PC-9 (cell line): ENCODE measurements at regions of chr20 and their contacts with region 1.

Region 1: DNA sequence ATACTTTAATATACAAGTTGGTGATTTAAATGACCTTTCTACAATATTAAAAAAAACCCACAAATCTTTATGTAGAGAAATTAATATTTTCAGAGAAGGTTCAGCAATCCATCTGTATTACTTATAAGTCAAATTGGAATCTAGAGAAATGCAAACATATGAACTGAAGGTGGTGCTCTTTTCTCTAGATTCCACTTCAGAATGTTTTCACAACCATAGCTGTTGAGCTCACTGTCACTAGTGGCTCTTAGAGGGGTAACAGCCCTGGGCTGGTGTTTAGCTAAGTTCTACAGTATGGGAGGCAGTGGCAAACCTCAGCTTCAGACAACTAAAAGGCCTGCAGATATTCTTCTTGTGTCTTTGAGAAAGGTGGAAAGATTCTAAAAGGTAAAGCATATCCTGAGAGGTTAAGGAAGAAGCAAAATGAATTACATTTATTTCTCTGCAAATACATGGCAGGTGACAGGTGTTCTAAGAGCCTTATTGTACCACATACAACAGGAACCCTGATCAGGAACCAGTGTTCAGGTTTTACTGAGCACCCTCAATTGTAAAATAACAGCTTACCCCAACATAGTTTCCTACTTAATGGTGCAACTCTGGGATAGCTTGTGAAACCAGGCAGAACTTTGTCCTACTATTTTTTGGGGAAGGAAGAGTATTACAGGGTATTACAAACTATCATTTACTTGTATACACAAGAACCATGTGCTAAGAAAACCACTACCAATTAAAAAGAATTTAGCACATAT is 56.6 kb upstream of the SAMHD1 start:
- DNase-seq: no peak
- H3K4me3 ChIP-seq: no peak overlapping the region
- H3K27ac ChIP-seq: no peak overlapping the region
- H3K4me1 ChIP-seq: no peaks in the 10 kb centered on the region
- H3K27me3 ChIP-seq: no peaks in the 10 kb centered on the region
- CTCF ChIP-seq: 0 out of 2 replicates have a peak, but pooled peaks have one; percentile 27

Region 2: GRCh38 chr20:36908603-36909002 is 99.5 kb before region 1 on chr20:
- CTCF ChIA-PET with region 1: interaction called, 10 read pairs
- POLR2A ChIA-PET with region 1: no interaction called
- intact Hi-C with region 1: no loop called
- DNase-seq: no peak
- H3K4me3 ChIP-seq: no peak overlapping the region
- H3K27ac ChIP-seq: no peak overlapping the region
- H3K4me1 ChIP-seq: no peaks in the 10 kb centered on the region
- H3K27me3 ChIP-seq: no peaks in the 10 kb centered on the region
- CTCF ChIP-seq: no peak

Region 3: DNA sequence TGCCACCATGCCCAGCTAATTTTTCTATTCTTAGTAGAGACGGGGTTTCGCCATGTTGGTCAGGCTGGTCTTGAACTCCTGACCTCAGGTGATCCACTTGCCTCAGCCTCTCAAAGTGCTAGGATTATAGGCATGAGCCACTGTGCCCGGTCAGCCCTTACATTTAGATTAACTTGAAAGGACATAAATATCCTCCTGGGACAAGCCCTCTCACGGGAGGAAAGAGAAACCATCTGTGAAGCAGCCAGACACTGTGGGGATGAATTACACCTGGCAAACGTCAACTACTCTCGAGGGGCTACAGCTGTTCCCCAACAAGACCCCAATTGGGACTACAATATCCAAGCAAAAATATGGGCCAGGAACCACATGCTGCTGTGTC is 23.8 kb before region 1 on chr20:
- CTCF ChIA-PET with region 1: no interaction called
- POLR2A ChIA-PET with region 1: no interaction called
- intact Hi-C with region 1: no loop called
- DNase-seq: no peak
- H3K4me3 ChIP-seq: no peak overlapping the region
- H3K27ac ChIP-seq: no peak overlapping the region
- H3K4me1 ChIP-seq: no peaks in the 10 kb centered on the region
- H3K27me3 ChIP-seq: no peaks in the 10 kb centered on the region
- CTCF ChIP-seq: no peak

Region 4: DNA sequence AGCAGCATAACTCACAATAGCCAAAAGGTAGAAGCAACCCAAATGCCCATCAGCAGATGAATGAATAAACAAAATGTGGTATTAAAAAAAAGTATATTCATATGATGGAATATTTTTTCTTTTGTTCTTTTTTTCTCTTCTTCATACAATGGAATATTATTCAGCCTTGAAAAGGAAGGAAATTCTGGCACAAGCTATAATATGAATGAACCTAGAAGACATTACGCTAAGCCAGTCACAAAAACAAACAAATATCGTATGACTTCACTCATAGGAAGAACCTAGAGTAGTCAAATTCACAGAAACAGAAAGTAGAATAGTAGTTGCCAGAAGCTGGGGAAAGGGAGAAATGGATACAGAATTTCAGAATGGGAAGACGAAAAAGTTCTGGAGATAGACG is 24.0 kb after region 1 on chr20:
- CTCF ChIA-PET with region 1: no interaction called
- POLR2A ChIA-PET with region 1: interaction called, 24 read pairs
- intact Hi-C with region 1: no loop called
- DNase-seq: no peak
- H3K4me3 ChIP-seq: no peak overlapping the region
- H3K27ac ChIP-seq: no peak overlapping the region
- H3K4me1 ChIP-seq: no peaks in the 10 kb centered on the region
- H3K27me3 ChIP-seq: no peaks in the 10 kb centered on the region
- CTCF ChIP-seq: no peak

Region 5: GRCh38 chr20:37090407-37090806 is 82.3 kb after region 1 on chr20:
- CTCF ChIA-PET with region 1: no interaction called
- POLR2A ChIA-PET with region 1: interaction called, 10 read pairs
- intact Hi-C with region 1: no loop called
- DNase-seq: no peak
- H3K4me3 ChIP-seq: no peak overlapping the region
- H3K27ac ChIP-seq: no peak overlapping the region
- H3K4me1 ChIP-seq: peaks cover 11% of the 10 kb centered on the region
- H3K27me3 ChIP-seq: no peaks in the 10 kb centered on the region
- CTCF ChIP-seq: no peak